Psoas muscle (tissue), 8 donors: ENCODE measurements at regions of chr6 and their contacts with region 1.

Region 1: GRCh38 chr6:45421709-45422502 is 44.2 kb upstream of the SUPT3H start:
- DNase-seq: peak; percentile 51 to 79
- ATAC-seq: peak; percentile 60 to 80 (median 77)
- H3K4me3 ChIP-seq: peak overlapping the region; percentile 73
- H3K27ac ChIP-seq: no peak overlapping the region
- H3K4me1 ChIP-seq: peaks cover 25% of the 10 kb centered on the region
- H3K27me3 ChIP-seq: peaks cover 0 to 73% (median 17%) of the 10 kb centered on the region in 3 donors
- CTCF ChIP-seq: no peak

Region 2: DNA sequence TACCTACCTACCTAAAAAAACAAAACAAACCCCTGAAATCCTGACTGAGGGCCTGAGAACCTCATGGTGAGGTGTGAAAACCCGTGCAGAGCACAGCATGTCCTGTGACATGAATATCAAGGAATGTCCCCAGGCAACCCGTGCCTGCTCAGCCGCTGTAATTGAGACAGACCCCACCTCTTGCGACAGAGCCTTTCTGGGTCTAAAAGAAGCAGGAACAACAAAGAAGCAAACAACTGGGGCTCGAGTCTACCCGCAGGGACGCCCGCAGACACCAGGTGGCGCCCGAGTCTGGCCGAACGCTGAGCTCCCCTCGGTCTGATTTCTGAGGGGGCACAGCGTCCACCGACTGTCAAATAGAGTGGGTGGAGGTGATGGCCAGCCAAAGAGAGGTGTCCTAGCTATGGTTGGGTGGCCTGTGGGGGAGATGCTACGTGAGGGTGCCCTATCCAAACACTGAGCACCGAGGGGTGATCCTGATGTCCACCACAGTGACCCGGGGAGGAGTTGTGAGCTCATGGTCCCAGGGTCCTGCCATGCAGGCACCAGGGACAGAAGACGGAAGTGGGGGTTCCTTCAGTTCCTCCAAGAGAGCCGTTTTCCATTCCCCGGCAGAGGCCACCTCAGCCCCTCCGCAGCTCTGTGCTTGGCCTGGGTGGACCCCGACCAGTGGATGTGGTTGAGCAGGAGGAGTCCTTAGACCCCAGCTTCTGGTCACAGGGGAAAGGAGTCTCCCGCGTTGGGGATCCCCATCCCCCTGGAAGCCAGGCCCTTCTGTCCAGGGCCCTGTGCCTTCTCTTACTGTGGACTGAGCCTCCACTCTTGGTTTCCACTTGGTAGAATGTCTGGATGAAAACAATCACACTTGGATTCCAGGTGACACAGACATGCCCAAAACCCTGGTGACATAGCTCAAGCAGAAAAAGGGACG is 766.2 kb before region 1 on chr6:
- intact Hi-C with region 1: loop called (anchors 10 kb)
- DNase-seq: peak; percentile 76 to 90
- ATAC-seq: peak; percentile 59 to 87 (median 74)
- H3K4me3 ChIP-seq: no peak overlapping the region
- H3K27ac ChIP-seq: no peak overlapping the region
- H3K4me1 ChIP-seq: no peaks in the 10 kb centered on the region
- H3K27me3 ChIP-seq: peaks cover 0 to 4% (median 0%) of the 10 kb centered on the region in 3 donors
- CTCF ChIP-seq: peak; percentile 88

Region 3: GRCh38 chr6:45383726-45384125 is 38.2 kb before region 1 on chr6:
- intact Hi-C with region 1: loop called in 1 of 2 experiments (anchors 5 kb)
- DNase-seq: no peak
- ATAC-seq: no peak
- H3K4me3 ChIP-seq: no peak overlapping the region
- H3K27ac ChIP-seq: no peak overlapping the region
- H3K4me1 ChIP-seq: peaks cover 4% of the 10 kb centered on the region
- H3K27me3 ChIP-seq: peaks cover 0 to 7% (median 0%) of the 10 kb centered on the region in 3 donors
- CTCF ChIP-seq: no peak

Region 4: GRCh38 chr6:45514454-45515230 is 92.7 kb after region 1 on chr6:
- intact Hi-C with region 1: loop called in 1 of 2 experiments (anchors 10 kb)
- DNase-seq: no peak
- ATAC-seq: peak in 1 of 4 donors; percentile 49
- H3K4me3 ChIP-seq: no peak overlapping the region
- H3K27ac ChIP-seq: no peak overlapping the region
- H3K4me1 ChIP-seq: no peaks in the 10 kb centered on the region
- H3K27me3 ChIP-seq: no peaks in the 10 kb centered on the region
- CTCF ChIP-seq: no peak